Activated naive CD4-positive, alpha-beta T cell treated with anti-CD3 and anti-CD28 coated beads for 36 hours (primary cell): ENCODE measurements at regions of chr2 and their contacts with region 1.

Region 1: DNA sequence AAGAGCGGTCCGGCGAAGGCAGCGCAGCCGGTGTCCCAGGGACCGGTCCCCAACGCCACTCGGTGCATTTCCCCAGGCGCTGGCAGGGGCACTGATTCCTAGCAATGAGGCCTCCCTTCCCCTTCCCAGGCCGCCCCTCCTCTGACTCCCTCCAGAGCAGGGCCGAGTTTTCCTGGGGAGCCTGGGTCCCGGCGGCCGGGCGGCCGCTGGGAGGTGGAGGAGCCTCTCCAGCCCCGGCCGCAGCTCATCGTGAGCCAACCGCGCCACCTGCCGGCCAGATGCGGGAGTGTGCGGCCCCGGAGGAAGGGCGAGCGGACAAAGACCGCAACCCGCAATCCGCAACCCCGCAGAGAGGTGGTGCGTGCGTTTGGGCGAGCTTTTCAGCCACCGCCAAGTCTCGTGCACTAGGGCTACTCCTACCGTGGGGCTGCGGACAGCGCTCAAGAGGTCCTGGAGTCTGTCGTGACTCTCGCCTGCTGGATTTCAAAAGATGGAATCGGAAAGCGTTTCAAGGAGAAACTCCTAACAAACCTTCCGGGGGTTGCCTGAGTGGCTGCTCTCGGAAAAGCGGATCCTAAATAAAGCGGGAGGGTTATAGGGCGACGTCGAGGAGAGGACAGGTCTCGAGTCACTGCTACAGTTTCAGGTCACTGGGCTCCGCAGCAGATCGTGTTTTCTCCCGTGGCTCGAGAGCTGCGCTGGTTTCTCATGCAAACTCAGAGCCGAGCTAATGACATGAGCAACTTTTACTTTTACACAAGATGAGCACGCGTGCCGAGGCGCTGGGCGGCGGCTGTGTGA is 1.5 kb upstream of the EPHA4 start:
- DNase-seq: peak; percentile 81
- H3K4me3 Mint-ChIP-seq: peak overlapping the region; percentile 45
- H3K27ac Mint-ChIP-seq: no peak overlapping the region
- H3K4me1 Mint-ChIP-seq: peaks cover 25% of the 10 kb centered on the region
- H3K27me3 Mint-ChIP-seq: peaks cover 52% of the 10 kb centered on the region

Region 2: DNA sequence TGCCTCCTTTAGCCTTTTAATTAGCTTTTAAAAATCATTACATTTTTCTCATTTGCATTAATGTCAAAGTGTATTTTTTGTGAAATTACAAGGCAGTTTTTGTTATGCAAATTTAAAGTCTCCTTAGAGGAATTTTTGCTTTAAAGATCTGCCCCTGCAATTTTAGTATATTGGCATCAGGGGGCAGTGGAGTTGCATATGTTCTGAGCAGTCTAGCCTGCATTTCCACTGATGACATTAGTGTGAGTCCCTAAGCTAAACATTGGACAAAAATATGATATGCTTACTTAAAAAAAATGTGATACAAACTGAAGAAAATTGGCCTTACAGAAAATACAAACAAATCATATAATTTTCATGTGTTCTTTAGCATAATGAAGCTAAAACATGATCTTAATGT is 1519.7 kb before region 1 on chr2:
- CTCF ChIA-PET with region 1: no interaction called
- intact Hi-C with region 1: loop called (anchors 2 kb)
- DNase-seq: no peak
- H3K4me3 Mint-ChIP-seq: no peak overlapping the region
- H3K27ac Mint-ChIP-seq: no peak overlapping the region
- H3K4me1 Mint-ChIP-seq: no peaks in the 10 kb centered on the region
- H3K27me3 Mint-ChIP-seq: no peaks in the 10 kb centered on the region

Region 3: GRCh38 chr2:221134718-221135117 is 438.9 kb before region 1 on chr2:
- CTCF ChIA-PET with region 1: no interaction called
- intact Hi-C with region 1: loop called (anchors 5 kb)
- DNase-seq: no peak
- H3K4me3 Mint-ChIP-seq: no peak overlapping the region
- H3K27ac Mint-ChIP-seq: no peak overlapping the region
- H3K4me1 Mint-ChIP-seq: no peaks in the 10 kb centered on the region
- H3K27me3 Mint-ChIP-seq: peaks cover under 1% of the 10 kb centered on the region

Region 4: GRCh38 chr2:221465776-221466175 is 107.9 kb before region 1 on chr2:
- CTCF ChIA-PET with region 1: no interaction called
- intact Hi-C with region 1: loop called (anchors 5 kb)
- DNase-seq: peak; percentile 6
- H3K4me3 Mint-ChIP-seq: no peak overlapping the region
- H3K27ac Mint-ChIP-seq: no peak overlapping the region
- H3K4me1 Mint-ChIP-seq: peaks cover 19% of the 10 kb centered on the region
- H3K27me3 Mint-ChIP-seq: peaks cover 10% of the 10 kb centered on the region

Region 5: GRCh38 chr2:221529943-221530652 is 43.5 kb before region 1 on chr2:
- CTCF ChIA-PET with region 1: no interaction called
- intact Hi-C with region 1: loop called (anchors 2 kb)
- DNase-seq: peak; percentile 20
- H3K4me3 Mint-ChIP-seq: peak overlapping the region; percentile 55
- H3K27ac Mint-ChIP-seq: peak overlapping the region; percentile 78
- H3K4me1 Mint-ChIP-seq: peaks cover 40% of the 10 kb centered on the region
- H3K27me3 Mint-ChIP-seq: no peaks in the 10 kb centered on the region